GM12878 (cell line): ENCODE measurements at regions of chr5 and their contacts with region 1.

Region 1: GRCh38 chr5:142922223-142922952 is 152.2 kb downstream of the ARHGAP26 start:
- DNase-seq: peak; percentile 21
- ATAC-seq: peak; percentile 92
- H3K4me3 ChIP-seq: no peak overlapping the region
- H3K27ac ChIP-seq: no peak overlapping the region
- H3K4me1 ChIP-seq: no peaks in the 10 kb centered on the region
- H3K27me3 ChIP-seq: no peaks in the 10 kb centered on the region
- CTCF ChIP-seq: peak; percentile 41 to 66 (median 48); a peak in 4 of 6 replicates
- EP300 ChIP-seq: no peak
- POLR2A ChIP-seq: no peak
- RAD21 ChIP-seq: peak; percentile 68

Region 2: GRCh38 chr5:142726188-142726731 is 196.1 kb before region 1 on chr5:
- CTCF ChIA-PET with region 1: no interaction called
- POLR2A ChIA-PET with region 1: no interaction called
- RAD21 ChIA-PET with region 1: no interaction called
- SMC1A ChIA-PET with region 1: no interaction called
- in situ Hi-C with region 1: no loop called
- intact Hi-C with region 1: no loop called
- DNase-seq: peak; percentile 40
- ATAC-seq: peak; percentile 79
- H3K4me3 ChIP-seq: no peak overlapping the region
- H3K27ac ChIP-seq: no peak overlapping the region
- H3K4me1 ChIP-seq: no peaks in the 10 kb centered on the region; the same call in 1 of the 2 replicates
- H3K27me3 ChIP-seq: no peaks in the 10 kb centered on the region
- CTCF ChIP-seq: no peak
- EP300 ChIP-seq: no peak
- POLR2A ChIP-seq: no peak
- RAD21 ChIP-seq: no peak

Region 3: DNA sequence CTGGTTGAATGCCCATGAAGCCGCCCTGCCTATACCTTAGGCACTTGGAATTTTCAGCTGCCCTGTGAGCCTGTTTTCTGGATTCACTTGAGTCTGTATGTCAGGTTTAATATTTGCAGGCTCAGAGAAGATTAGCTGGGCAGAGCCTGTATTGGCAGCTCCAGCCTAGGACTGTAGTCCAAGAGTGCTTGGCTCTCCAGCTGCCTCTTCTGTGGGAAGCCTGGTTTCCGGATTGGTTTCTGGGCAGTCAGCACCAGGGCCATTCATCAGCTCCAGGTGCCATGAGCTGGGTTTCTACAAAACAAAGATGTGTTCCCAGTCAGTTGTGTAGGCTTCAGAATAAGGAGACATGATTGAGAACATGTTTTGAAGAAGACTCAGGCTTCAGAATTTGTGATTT is 62.1 kb before region 1 on chr5:
- CTCF ChIA-PET with region 1: no interaction called
- POLR2A ChIA-PET with region 1: no interaction called
- RAD21 ChIA-PET with region 1: no interaction called
- SMC1A ChIA-PET with region 1: no interaction called
- in situ Hi-C with region 1: no loop called
- intact Hi-C with region 1: no loop called
- DNase-seq: no peak
- ATAC-seq: no peak
- H3K4me3 ChIP-seq: no peak overlapping the region
- H3K27ac ChIP-seq: no peak overlapping the region
- H3K4me1 ChIP-seq: no peaks in the 10 kb centered on the region
- H3K27me3 ChIP-seq: no peaks in the 10 kb centered on the region
- CTCF ChIP-seq: no peak
- EP300 ChIP-seq: no peak
- POLR2A ChIP-seq: no peak
- RAD21 ChIP-seq: no peak

Region 4: GRCh38 chr5:142959683-142960657 is 37.6 kb after region 1 on chr5:
- CTCF ChIA-PET with region 1: interaction called, 37 read pairs
- POLR2A ChIA-PET with region 1: interaction called, 6 read pairs
- RAD21 ChIA-PET with region 1: interaction called, 5 read pairs
- SMC1A ChIA-PET with region 1: interaction called, 7 read pairs
- in situ Hi-C with region 1: no loop called
- intact Hi-C with region 1: loop called (anchors 2 kb)
- DNase-seq: no peak
- ATAC-seq: peak; percentile 82
- H3K4me3 ChIP-seq: no peak overlapping the region
- H3K27ac ChIP-seq: no peak overlapping the region
- H3K4me1 ChIP-seq: peaks cover 5% of the 10 kb centered on the region; the same call in 1 of the 2 replicates
- H3K27me3 ChIP-seq: no peaks in the 10 kb centered on the region
- CTCF ChIP-seq: no peak
- EP300 ChIP-seq: peak in 1 of 2 experiments; percentile 38; a peak in 1 of 4 replicates
- POLR2A ChIP-seq: no peak
- RAD21 ChIP-seq: no peak

Region 5: GRCh38 chr5:143008809-143009521 is 86.6 kb after region 1 on chr5:
- CTCF ChIA-PET with region 1: interaction called, 78 read pairs
- POLR2A ChIA-PET with region 1: no interaction called
- RAD21 ChIA-PET with region 1: interaction called, 129 read pairs
- SMC1A ChIA-PET with region 1: interaction called, 149 read pairs
- in situ Hi-C with region 1: loop called (anchors 10 kb)
- intact Hi-C with region 1: loop called (anchors 2 kb)
- DNase-seq: peak; percentile 98
- ATAC-seq: peak; percentile 90
- H3K4me3 ChIP-seq: no peak overlapping the region
- H3K27ac ChIP-seq: peak overlapping the region; percentile 47; the same call in 1 of the 2 replicates
- H3K4me1 ChIP-seq: peaks cover 27% of the 10 kb centered on the region
- H3K27me3 ChIP-seq: no peaks in the 10 kb centered on the region
- CTCF ChIP-seq: peak; percentile 13 to 25 (median 25); a peak in 2 of 6 replicates
- EP300 ChIP-seq: peak; percentile 100
- POLR2A ChIP-seq: no peak
- RAD21 ChIP-seq: 0 out of 2 replicates have a peak, but pooled peaks have one; percentile 30

Region 6: DNA sequence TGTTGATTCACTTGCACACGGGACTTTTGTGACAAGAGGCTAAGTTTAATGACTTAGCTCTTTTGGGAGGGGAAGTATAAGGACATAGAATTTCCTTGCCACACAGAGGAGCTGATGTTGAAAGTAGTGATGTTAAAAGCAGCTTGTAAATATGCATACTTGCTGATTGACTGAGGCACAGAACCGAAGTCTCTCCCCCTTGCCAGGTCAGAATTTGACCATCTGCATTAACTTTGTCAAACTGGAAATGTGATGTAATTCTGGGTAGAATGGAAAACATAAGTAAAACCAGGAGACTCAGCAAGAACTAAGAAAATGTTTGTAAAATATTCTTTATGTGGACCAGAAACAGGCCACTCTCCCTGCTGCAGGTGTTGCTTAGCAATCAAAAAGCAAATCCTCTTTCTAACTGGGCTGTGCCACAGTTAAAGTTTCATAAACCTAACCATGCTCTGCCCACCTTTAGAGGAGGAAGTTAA is 196.9 kb after region 1 on chr5:
- CTCF ChIA-PET with region 1: no interaction called
- POLR2A ChIA-PET with region 1: no interaction called
- RAD21 ChIA-PET with region 1: no interaction called
- SMC1A ChIA-PET with region 1: no interaction called
- in situ Hi-C with region 1: no loop called
- intact Hi-C with region 1: loop called (anchors 10 kb)
- DNase-seq: no peak
- ATAC-seq: peak; percentile 82
- H3K4me3 ChIP-seq: no peak overlapping the region
- H3K27ac ChIP-seq: peak overlapping the region; percentile 35
- H3K4me1 ChIP-seq: peaks cover 23% of the 10 kb centered on the region
- H3K27me3 ChIP-seq: no peaks in the 10 kb centered on the region
- CTCF ChIP-seq: no peak
- EP300 ChIP-seq: no peak
- POLR2A ChIP-seq: no peak
- RAD21 ChIP-seq: no peak

Region 7: DNA sequence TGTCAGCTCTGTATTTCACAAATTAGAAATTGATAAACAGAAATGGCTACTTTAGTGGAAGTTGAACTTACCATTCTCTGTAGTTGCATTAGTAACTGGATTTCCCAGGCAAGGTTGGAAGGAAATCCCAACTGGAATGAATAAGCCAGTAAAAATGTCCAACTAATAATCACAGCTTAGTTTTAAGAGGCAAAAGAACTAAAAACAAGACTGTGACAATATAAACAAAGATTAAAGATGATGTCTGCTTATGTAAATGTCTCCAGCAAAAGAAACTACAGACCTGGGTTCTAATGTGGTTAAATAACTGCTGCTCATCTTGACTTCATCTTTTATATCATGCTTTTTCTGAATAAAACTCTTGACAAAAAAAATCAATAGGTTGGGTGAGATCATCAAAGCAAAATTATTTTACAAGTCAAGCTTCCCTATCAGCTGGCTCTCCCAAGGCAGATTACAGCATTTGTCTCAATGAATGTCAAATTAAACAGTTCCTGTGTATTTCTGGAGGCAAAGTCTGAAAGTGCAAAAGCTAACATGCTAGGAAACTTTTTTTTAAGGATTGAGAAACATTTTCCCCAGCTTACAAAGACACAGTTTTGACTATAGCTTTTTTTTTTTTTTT is 827.3 kb after region 1 on chr5:
- CTCF ChIA-PET with region 1: no interaction called
- POLR2A ChIA-PET with region 1: no interaction called
- RAD21 ChIA-PET with region 1: no interaction called
- SMC1A ChIA-PET with region 1: no interaction called
- in situ Hi-C with region 1: no loop called
- intact Hi-C with region 1: no loop called
- DNase-seq: no peak
- ATAC-seq: no peak
- H3K4me3 ChIP-seq: no peak overlapping the region
- H3K27ac ChIP-seq: no peak overlapping the region
- H3K4me1 ChIP-seq: no peaks in the 10 kb centered on the region
- H3K27me3 ChIP-seq: no peaks in the 10 kb centered on the region
- CTCF ChIP-seq: no peak
- EP300 ChIP-seq: no peak
- POLR2A ChIP-seq: no peak
- RAD21 ChIP-seq: no peak

Region 8: GRCh38 chr5:143968011-143968878 is 1045.9 kb after region 1 on chr5:
- CTCF ChIA-PET with region 1: interaction called, 31 read pairs
- POLR2A ChIA-PET with region 1: no interaction called
- RAD21 ChIA-PET with region 1: interaction called, 9 read pairs
- SMC1A ChIA-PET with region 1: interaction called, 11 read pairs
- in situ Hi-C with region 1: loop called (anchors 5 kb)
- intact Hi-C with region 1: loop called (anchors 5 kb)
- DNase-seq: peak; percentile 34
- ATAC-seq: peak; percentile 86
- H3K4me3 ChIP-seq: no peak overlapping the region
- H3K27ac ChIP-seq: no peak overlapping the region
- H3K4me1 ChIP-seq: no peaks in the 10 kb centered on the region
- H3K27me3 ChIP-seq: no peaks in the 10 kb centered on the region; a peak in 1 of 4 replicates
- CTCF ChIP-seq: peak; percentile 46 to 63 (median 56); a peak in 5 of 6 replicates
- EP300 ChIP-seq: no peak
- POLR2A ChIP-seq: no peak
- RAD21 ChIP-seq: peak; percentile 69

Region 9: GRCh38 chr5:144191998-144192397 is 1269.6 kb after region 1 on chr5:
- CTCF ChIA-PET with region 1: interaction called, 20 read pairs
- POLR2A ChIA-PET with region 1: no interaction called
- RAD21 ChIA-PET with region 1: interaction called, 5 read pairs
- SMC1A ChIA-PET with region 1: interaction called, 5 read pairs
- in situ Hi-C with region 1: no loop called
- intact Hi-C with region 1: loop called (anchors 5 kb)
- DNase-seq: peak; percentile 73
- ATAC-seq: peak; percentile 85
- H3K4me3 ChIP-seq: no peak overlapping the region
- H3K27ac ChIP-seq: peak overlapping the region; percentile 73
- H3K4me1 ChIP-seq: peaks cover 42% of the 10 kb centered on the region
- H3K27me3 ChIP-seq: no peaks in the 10 kb centered on the region
- CTCF ChIP-seq: peak; percentile 52 to 73 (median 69); a peak in 5 of 6 replicates
- EP300 ChIP-seq: no peak
- POLR2A ChIP-seq: no peak
- RAD21 ChIP-seq: peak; percentile 78